Common myeloid progenitor, CD34-positive (primary cell): ENCODE measurements at regions of chr17 and their contacts with region 1.

Region 1: DNA sequence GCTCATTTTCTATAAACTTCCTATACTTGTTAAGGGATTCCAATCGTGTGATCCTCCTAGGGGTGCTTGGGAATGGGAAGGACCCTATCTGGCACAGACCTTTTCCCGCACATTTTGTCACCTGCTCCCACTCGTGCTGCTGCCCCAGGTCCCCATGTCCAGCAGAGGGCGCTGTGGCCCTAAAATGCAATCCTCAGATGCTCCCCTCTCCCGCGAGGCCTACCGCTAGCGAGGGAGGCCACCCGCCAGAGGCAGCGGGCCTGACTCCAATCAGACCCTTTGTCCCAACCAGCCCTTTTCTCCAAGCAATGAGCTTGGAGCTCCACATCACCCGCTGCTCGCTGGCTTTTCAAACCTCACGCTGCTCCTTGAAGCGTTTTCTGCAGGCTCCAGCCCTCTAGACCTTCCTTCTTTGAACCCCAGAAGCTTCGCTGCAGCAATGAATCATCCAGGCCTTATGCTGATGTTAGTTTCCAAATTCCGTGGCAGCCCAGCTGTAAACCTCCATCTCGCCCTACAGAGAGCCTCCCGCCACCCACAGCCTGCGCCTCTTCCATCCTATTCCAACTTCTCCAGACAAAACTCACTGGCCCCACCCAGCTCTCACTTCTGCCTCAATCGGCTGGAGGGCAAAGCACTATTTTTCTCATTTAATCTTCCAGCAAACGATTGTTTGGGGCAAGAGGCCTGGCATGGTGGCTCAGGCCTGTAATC is 23.6 kb upstream of the FZD2 start:
- DNase-seq: peak; percentile 81 to 87 (median 82)
- H3K4me3 ChIP-seq: no peak overlapping the region
- H3K27ac ChIP-seq: no peak overlapping the region
- H3K4me1 ChIP-seq: peaks cover 0 to 10% (median 0%) of the 10 kb centered on the region in 4 experiments
- H3K27me3 ChIP-seq: no peaks in the 10 kb centered on the region

Region 2: DNA sequence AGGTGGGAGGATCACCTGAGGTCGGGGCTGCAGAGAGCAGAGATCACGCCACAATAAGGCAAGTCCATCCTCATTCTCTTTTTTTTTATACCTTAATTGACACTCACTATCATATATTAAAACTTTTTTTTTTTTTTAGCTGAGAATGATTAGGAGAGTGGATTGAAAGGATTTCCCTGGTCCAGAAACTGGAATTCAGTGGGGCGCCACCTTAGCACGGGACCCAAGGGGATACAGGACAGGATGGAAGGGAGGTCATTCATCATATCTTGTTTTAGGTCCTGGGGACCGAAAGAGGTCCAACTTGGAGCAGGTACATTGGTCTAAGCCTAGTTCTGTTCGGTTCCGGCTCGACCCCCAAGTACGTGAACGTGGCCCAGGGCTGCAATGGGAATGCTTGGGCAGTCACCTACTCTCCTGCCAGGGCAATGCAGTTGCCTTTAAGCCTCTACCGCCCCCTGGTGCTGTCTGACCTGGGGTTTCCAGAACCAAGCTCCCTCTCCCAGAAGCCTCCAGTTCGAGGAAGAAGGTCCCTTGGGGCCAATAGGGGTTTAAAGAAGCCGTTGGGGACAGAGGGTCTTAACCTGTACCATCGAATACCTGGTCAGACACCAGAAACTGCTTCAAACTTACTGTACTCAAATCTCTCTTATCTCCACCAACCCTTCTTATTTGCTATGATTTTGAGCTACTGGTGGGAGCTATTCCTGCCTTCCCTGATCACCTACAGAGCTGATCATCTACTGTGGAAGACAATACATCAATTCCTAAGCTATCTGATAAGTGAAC is 10.6 kb before region 1 on chr17:
- CTCF ChIA-PET with region 1: interaction called, 19 read pairs
- POLR2A ChIA-PET with region 1: no interaction called
- DNase-seq: peak; percentile 78 to 83 (median 81)
- H3K4me3 ChIP-seq: peak overlapping the region in 1 of 7 experiments; percentile 42
- H3K27ac ChIP-seq: no peak overlapping the region
- H3K4me1 ChIP-seq: peaks cover 0 to 4% (median 2%) of the 10 kb centered on the region in 4 experiments
- H3K27me3 ChIP-seq: no peaks in the 10 kb centered on the region

Region 3: GRCh38 chr17:44636562-44636961 is 102.9 kb after region 1 on chr17:
- CTCF ChIA-PET with region 1: interaction called, 59 read pairs
- POLR2A ChIA-PET with region 1: no interaction called
- DNase-seq: peak; percentile 42 to 69 (median 63)
- H3K4me3 ChIP-seq: no peak overlapping the region
- H3K27ac ChIP-seq: no peak overlapping the region
- H3K4me1 ChIP-seq: no peaks in the 10 kb centered on the region
- H3K27me3 ChIP-seq: peaks cover 0 to 7% (median 0%) of the 10 kb centered on the region in 5 experiments

Region 4: GRCh38 chr17:44672479-44673093 is 138.9 kb after region 1 on chr17:
- CTCF ChIA-PET with region 1: interaction called, 11 read pairs
- POLR2A ChIA-PET with region 1: no interaction called
- DNase-seq: peak in 2 of 3 donors; percentile 38 to 51
- H3K4me3 ChIP-seq: no peak overlapping the region
- H3K27ac ChIP-seq: no peak overlapping the region
- H3K4me1 ChIP-seq: no peaks in the 10 kb centered on the region
- H3K27me3 ChIP-seq: peaks cover 0 to 2% (median 0%) of the 10 kb centered on the region in 5 experiments